Activated T-helper 1 cell treated with anti-CD3 and anti-CD28 coated beads, Interleukin-12 subunit alpha, Interleukin-12 subunit beta, Interleukin-2, Interleukin-4 antibody, amounts not matched to agents 30 ng/mL and 10 ng/mL and 1 ng/mL, durations not matched to agents 14 hours and 24 hours and 36 hours (primary cell): ENCODE measurements at regions of chr5 and their contacts with region 1.

Region 1: GRCh38 chr5:3118340-3118739 is 366.9 kb upstream of the IRX2 start:
- DNase-seq: no peak
- H3K4me3 Mint-ChIP-seq: no peak overlapping the region
- H3K27ac Mint-ChIP-seq: no peak overlapping the region
- H3K4me1 Mint-ChIP-seq: no peaks in the 10 kb centered on the region
- H3K27me3 Mint-ChIP-seq: peaks cover 15% of the 10 kb centered on the region

Region 2: DNA sequence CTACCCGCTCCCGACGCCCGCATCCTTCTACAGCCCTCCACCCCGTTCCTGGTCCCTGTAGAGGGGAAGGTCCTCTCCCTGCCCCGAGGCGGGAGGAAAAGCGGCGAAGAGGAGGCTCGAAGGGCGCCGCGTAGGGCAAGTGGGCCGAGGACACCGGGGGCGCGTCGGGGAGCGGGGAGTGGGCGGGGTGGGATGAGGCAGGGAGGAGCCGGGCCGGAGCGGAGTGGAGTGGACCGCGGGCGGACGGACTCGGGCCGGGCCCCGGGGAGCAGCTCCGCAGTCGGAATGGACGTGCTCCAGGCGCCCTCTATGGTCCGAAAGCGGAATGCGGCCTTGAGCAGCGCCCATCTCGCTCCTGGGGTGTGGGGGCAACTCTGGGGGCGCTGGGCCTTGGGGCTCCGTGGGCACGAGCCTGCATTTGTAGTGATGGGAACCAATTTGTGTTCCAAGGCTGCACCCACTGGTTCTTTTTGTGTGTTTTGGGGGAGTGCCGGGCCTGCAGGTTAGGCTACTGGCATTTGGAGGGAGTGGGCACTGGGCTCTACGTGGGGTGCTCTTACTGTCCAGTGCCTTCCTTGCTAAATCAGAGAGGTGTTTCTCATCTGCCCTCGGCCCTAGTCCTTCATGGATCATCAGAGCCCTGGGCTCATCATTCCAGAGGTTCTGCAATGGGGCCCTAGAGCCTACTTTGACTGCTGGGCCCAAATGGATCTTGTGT is 484.6 kb after region 1 on chr5:
- intact Hi-C with region 1: loop called (anchors 10 kb)
- DNase-seq: no peak
- H3K4me3 Mint-ChIP-seq: no peak overlapping the region
- H3K27ac Mint-ChIP-seq: no peak overlapping the region
- H3K4me1 Mint-ChIP-seq: no peaks in the 10 kb centered on the region
- H3K27me3 Mint-ChIP-seq: peaks cover 64% of the 10 kb centered on the region